CD14-positive monocyte (primary cell): ENCODE measurements at regions of chr19 and their contacts with region 1.

Region 1: GRCh38 chr19:488505-489417 is 7.5 kb upstream of the MADCAM1 start:
- DNase-seq: peak; percentile 76 to 91 (median 89)
- H3K4me3 ChIP-seq: peak overlapping the region; percentile 65 to 91 (median 71)
- H3K4me3 Mint-ChIP-seq: peak overlapping the region; percentile 83 to 87
- H3K27ac ChIP-seq: peak overlapping the region; percentile 76 to 84
- H3K27ac Mint-ChIP-seq: peak overlapping the region in 6 of 7 donors; percentile 66 to 92 (median 80)
- H3K4me1 ChIP-seq: peaks cover 12 to 19% of the 10 kb centered on the region in 2 donors
- H3K4me1 Mint-ChIP-seq: peaks cover 11% of the 10 kb centered on the region
- H3K27me3 ChIP-seq: peaks cover 0 to 9% of the 10 kb centered on the region in 2 donors
- H3K27me3 Mint-ChIP-seq: peaks cover 24 to 36% (median 32%) of the 10 kb centered on the region in 3 donors
- CTCF ChIP-seq: no peak

Region 2: DNA sequence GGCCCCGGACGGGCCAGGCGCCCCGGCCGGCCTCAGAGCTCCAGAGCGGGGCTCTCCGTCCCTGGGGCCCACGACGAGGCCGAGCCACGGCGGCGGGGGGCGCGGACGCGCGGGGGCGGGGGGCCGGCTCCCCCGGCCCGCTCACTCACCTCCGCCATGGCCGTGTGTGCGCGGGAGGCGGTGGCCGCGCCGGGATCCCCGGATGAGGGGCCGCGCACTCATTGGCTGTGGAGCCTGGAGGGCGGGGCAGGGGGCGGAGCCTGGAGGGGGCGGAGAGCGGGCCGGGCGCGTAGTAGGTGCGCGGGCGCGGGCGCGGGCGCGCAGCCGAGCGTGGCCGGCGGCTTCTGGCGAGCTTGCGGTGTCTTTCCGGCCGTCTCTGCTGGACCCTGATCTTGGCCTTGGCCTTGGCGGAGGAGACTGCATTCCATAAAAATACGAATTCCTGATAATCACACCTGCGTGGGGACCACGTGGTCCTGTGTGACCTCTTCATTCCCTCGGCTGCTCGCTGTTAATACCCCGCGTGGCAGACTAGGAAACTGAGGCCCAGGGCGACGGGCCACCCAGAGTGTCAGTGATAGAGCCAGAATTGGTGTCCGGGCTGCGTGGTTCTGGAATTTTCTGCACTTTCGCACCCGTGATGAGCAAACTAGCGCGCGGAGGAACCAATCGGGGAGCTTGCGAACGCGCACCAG is 144.0 kb before region 1 on chr19 and contains the start of gene MIER2:
- intact Hi-C with region 1: loop called in 1 of 2 experiments (anchors 10 kb)
- DNase-seq: peak; percentile 74 to 85 (median 77)
- H3K4me3 ChIP-seq: peak within 1 kb of the TSS; percentile 41 to 86 (median 81)
- H3K4me3 Mint-ChIP-seq: peak within 1 kb of the TSS; percentile 87 to 88
- H3K27ac ChIP-seq: peak within 1 kb of the TSS; percentile 60 to 91
- H3K27ac Mint-ChIP-seq: peak within 1 kb of the TSS; percentile 58 to 97 (median 93)
- H3K4me1 ChIP-seq: peaks cover 43 to 51% of the 10 kb centered on the region in 2 donors
- H3K4me1 Mint-ChIP-seq: peaks cover 51% of the 10 kb centered on the region
- H3K27me3 ChIP-seq: peaks cover 0 to 19% of the 10 kb centered on the region in 2 donors
- H3K27me3 Mint-ChIP-seq: peaks cover 18 to 33% (median 27%) of the 10 kb centered on the region in 3 donors
- CTCF ChIP-seq: no peak
- polyA plus RNA-seq, gene MIER2: 3.6 to 21.9 (median 6.9) TPM

Region 3: DNA sequence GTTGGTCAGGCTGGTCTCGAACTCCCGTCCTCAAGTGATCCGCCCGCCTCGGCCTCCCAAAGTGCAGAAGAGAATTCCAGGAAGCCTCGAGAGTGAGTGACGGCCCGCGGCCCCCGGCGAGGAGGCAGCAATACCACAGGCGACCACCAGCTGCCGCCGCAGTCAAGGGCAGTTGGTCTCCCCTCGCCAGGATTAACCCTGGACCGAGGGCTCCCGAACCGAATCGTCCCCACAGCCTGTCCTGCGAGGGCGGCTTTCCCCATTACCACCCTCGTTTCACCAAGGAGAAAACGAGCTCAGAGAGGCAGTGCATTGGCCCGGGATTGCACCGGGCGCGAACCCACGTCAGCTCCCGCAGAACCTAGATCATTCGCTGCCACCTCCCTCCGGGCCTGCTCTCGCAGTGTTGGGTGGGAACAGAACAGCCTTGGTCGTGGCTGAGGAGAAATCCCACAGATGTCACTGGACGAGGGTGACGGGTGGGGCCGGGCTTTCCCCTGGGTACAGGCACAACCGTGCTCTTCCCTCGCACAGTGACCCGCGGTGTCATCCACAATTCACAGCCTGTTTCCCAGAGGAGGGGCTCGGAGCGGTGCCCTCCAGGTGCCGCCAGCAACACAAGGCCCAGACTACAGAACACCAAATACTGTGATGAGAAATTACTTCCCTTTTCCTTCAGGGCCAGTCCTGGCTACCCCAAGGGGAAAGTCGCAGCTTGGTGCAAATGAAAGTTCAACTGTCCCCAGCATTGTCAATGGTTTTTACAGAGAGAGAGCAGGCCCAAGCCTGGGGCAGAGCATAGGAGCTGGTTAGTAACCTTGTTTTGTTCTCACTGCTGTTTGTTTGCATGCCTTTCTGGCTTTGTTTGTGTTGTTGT is 104.6 kb before region 1 on chr19:
- intact Hi-C with region 1: no loop called
- DNase-seq: no peak
- H3K4me3 ChIP-seq: no peak overlapping the region
- H3K4me3 Mint-ChIP-seq: peak overlapping the region; percentile 24 to 73
- H3K27ac ChIP-seq: no peak overlapping the region
- H3K27ac Mint-ChIP-seq: no peak overlapping the region
- H3K4me1 ChIP-seq: no peaks in the 10 kb centered on the region
- H3K4me1 Mint-ChIP-seq: peaks cover 6% of the 10 kb centered on the region
- H3K27me3 ChIP-seq: peaks cover 0 to 31% of the 10 kb centered on the region in 2 donors
- H3K27me3 Mint-ChIP-seq: peaks cover 37 to 59% (median 48%) of the 10 kb centered on the region in 3 donors
- CTCF ChIP-seq: peak; percentile 37

Region 4: GRCh38 chr19:718991-719512 is 230.3 kb after region 1 on chr19:
- intact Hi-C with region 1: no loop called
- DNase-seq: no peak
- H3K4me3 ChIP-seq: peak overlapping the region in 1 of 3 experiments; percentile 34
- H3K4me3 Mint-ChIP-seq: peak overlapping the region in 1 of 2 donors; percentile 59
- H3K27ac ChIP-seq: no peak overlapping the region
- H3K27ac Mint-ChIP-seq: no peak overlapping the region
- H3K4me1 ChIP-seq: peaks cover 10 to 17% of the 10 kb centered on the region in 2 donors
- H3K4me1 Mint-ChIP-seq: peaks cover 6% of the 10 kb centered on the region
- H3K27me3 ChIP-seq: peaks cover 7 to 22% of the 10 kb centered on the region in 2 donors
- H3K27me3 Mint-ChIP-seq: peaks cover 20 to 46% (median 34%) of the 10 kb centered on the region in 3 donors
- CTCF ChIP-seq: no peak